MCF 10A (cell line): ENCODE measurements at regions of chr7 and their contacts with region 1.

Region 1: DNA sequence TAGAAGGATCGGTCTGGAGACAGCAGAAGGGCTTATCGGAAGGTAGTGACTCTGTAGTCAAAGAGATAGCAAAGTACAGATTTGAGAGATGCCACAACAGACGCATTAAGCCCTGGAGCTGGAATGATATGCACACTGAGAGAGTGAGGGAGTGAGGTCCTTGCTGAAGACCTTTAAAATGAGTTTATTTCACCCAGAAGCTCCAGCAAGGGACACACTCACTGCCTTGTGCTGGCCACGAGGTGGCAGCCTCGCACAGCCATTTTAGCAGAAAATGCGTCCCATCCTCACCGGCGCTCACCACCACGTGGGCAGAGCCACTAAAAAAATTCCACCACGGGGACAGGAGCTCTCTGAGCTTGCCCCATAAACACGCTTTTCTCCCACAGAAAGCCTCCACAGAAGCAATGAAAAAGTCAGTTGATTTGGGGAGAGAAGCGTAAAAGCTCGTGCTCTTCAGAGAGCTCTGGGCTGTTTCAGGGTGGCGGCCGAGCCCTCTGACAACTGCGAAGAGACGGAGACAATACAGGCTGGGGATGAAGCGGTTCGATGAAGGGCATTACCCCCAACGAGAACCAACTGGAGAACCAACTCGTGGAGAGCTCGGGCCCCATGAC is 163.0 kb upstream of the KLF14 start:
- DNase-seq: peak; percentile 74
- H3K4me3 Mint-ChIP-seq: peak overlapping the region; percentile 35
- H3K27ac Mint-ChIP-seq: peak overlapping the region; percentile 76
- H3K4me1 Mint-ChIP-seq: peaks cover 83% of the 10 kb centered on the region
- H3K27me3 Mint-ChIP-seq: no peaks in the 10 kb centered on the region
- CTCF ChIP-seq: peak; percentile 63

Region 2: DNA sequence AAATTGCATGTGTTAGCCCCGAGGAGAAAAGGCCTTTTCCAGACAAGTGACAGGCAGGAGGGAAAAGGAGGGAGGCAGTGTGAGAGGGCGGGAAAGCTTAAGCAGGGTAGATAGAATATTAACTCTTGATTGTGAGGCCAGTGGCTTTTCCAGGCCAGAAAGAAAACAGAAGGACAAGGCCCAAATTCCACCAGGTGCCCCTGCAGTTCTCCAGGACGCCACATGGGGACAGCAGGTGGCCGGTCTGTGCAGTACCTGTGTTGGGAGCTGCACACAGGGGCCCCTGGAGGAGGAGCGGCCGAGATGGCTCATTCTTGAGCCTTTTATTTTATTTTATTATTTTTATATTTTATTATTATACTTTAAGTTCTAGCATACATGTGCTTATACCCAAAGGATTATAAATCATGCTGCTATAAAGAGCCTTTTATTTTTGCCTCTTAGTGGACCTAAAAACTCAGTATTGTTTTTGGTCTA is 21.7 kb before region 1 on chr7:
- CTCF ChIA-PET with region 1: interaction called, 89 read pairs
- POLR2A ChIA-PET with region 1: interaction called, 75 read pairs
- intact Hi-C with region 1: no loop called
- DNase-seq: peak; percentile 69
- H3K4me3 Mint-ChIP-seq: no peak overlapping the region
- H3K27ac Mint-ChIP-seq: peak overlapping the region; percentile 89
- H3K4me1 Mint-ChIP-seq: peaks cover 41% of the 10 kb centered on the region
- H3K27me3 Mint-ChIP-seq: no peaks in the 10 kb centered on the region
- CTCF ChIP-seq: peak; percentile 92

Region 3: GRCh38 chr7:130921391-130922180 is 24.6 kb after region 1 on chr7:
- CTCF ChIA-PET with region 1: interaction called, 26 read pairs
- POLR2A ChIA-PET with region 1: interaction called, 39 read pairs
- intact Hi-C with region 1: no loop called
- DNase-seq: no peak
- H3K4me3 Mint-ChIP-seq: no peak overlapping the region
- H3K27ac Mint-ChIP-seq: peak overlapping the region; percentile 42
- H3K4me1 Mint-ChIP-seq: peaks cover 53% of the 10 kb centered on the region
- H3K27me3 Mint-ChIP-seq: no peaks in the 10 kb centered on the region
- CTCF ChIP-seq: no peak

Region 4: GRCh38 chr7:130941322-130942210 is 44.6 kb after region 1 on chr7:
- CTCF ChIA-PET with region 1: interaction called, 123 read pairs
- POLR2A ChIA-PET with region 1: interaction called, 106 read pairs
- intact Hi-C with region 1: loop called (anchors 2 kb)
- DNase-seq: peak; percentile 41
- H3K4me3 Mint-ChIP-seq: peak overlapping the region; percentile 76
- H3K27ac Mint-ChIP-seq: peak overlapping the region; percentile 90
- H3K4me1 Mint-ChIP-seq: peaks cover 70% of the 10 kb centered on the region
- H3K27me3 Mint-ChIP-seq: no peaks in the 10 kb centered on the region
- CTCF ChIP-seq: no peak

Region 5: GRCh38 chr7:130966246-130967009 is 69.4 kb after region 1 on chr7:
- CTCF ChIA-PET with region 1: interaction called, 51 read pairs
- POLR2A ChIA-PET with region 1: interaction called, 93 read pairs
- intact Hi-C with region 1: no loop called
- DNase-seq: no peak
- H3K4me3 Mint-ChIP-seq: no peak overlapping the region
- H3K27ac Mint-ChIP-seq: no peak overlapping the region
- H3K4me1 Mint-ChIP-seq: peaks cover 12% of the 10 kb centered on the region
- H3K27me3 Mint-ChIP-seq: no peaks in the 10 kb centered on the region
- CTCF ChIP-seq: no peak

Region 6: GRCh38 chr7:130988443-130988842 is 91.4 kb after region 1 on chr7:
- CTCF ChIA-PET with region 1: interaction called, 50 read pairs
- POLR2A ChIA-PET with region 1: interaction called, 15 read pairs
- intact Hi-C with region 1: no loop called
- DNase-seq: no peak
- H3K4me3 Mint-ChIP-seq: no peak overlapping the region
- H3K27ac Mint-ChIP-seq: no peak overlapping the region
- H3K4me1 Mint-ChIP-seq: peaks cover 45% of the 10 kb centered on the region
- H3K27me3 Mint-ChIP-seq: no peaks in the 10 kb centered on the region
- CTCF ChIP-seq: no peak

Region 7: GRCh38 chr7:131007394-131008330 is 110.7 kb after region 1 on chr7:
- CTCF ChIA-PET with region 1: interaction called, 33 read pairs
- POLR2A ChIA-PET with region 1: interaction called, 13 read pairs
- intact Hi-C with region 1: loop called (anchors 1 kb)
- DNase-seq: peak; percentile 87
- H3K4me3 Mint-ChIP-seq: peak overlapping the region; percentile 15
- H3K27ac Mint-ChIP-seq: peak overlapping the region; percentile 84
- H3K4me1 Mint-ChIP-seq: peaks cover 46% of the 10 kb centered on the region
- H3K27me3 Mint-ChIP-seq: no peaks in the 10 kb centered on the region
- CTCF ChIP-seq: peak; percentile 58